ENCODE measurements at regions of chr7 and their contacts with region 1.

Region 1: DNA sequence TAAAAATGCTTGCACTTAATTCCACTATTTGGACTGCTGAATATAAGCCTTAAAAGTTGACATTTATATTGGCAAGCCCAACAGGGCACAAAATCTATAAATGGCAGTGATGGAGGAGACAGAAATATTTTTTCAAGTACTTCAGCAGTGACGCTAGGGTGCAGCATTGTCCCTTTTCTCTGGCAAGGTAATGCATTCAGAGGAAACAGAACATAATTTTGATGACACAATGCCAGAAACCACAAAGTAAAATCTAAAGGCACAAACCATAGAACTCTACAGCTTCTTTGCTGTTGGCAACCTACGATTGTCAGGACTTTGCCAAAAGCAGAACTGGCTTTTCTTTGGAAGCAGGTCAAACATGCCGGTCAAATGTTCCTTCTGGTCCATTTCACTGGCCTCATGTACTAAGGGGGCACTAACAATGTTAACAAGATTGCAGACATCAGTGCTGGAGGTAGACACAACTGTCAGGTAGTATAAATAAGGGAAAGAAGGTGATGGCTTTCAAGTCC is 30.9 kb upstream of the FAM133B start:
- DNase-seq: peak; percentile 86
- H3K4me3 Mint-ChIP-seq: peak overlapping the region; percentile 49
- H3K27ac Mint-ChIP-seq: peak overlapping the region; percentile 93
- H3K4me1 Mint-ChIP-seq: peaks cover 53% of the 10 kb centered on the region
- H3K27me3 Mint-ChIP-seq: no peaks in the 10 kb centered on the region

Region 2: GRCh38 chr7:92517631-92518030 is 103.5 kb before region 1 on chr7:
- CTCF ChIA-PET with region 1: no interaction called
- POLR2A ChIA-PET with region 1: no interaction called
- intact Hi-C with region 1: no loop called
- DNase-seq: no peak
- H3K4me3 Mint-ChIP-seq: no peak overlapping the region
- H3K27ac Mint-ChIP-seq: peak overlapping the region; percentile 6
- H3K4me1 Mint-ChIP-seq: peaks cover 8% of the 10 kb centered on the region
- H3K27me3 Mint-ChIP-seq: no peaks in the 10 kb centered on the region

Region 3: DNA sequence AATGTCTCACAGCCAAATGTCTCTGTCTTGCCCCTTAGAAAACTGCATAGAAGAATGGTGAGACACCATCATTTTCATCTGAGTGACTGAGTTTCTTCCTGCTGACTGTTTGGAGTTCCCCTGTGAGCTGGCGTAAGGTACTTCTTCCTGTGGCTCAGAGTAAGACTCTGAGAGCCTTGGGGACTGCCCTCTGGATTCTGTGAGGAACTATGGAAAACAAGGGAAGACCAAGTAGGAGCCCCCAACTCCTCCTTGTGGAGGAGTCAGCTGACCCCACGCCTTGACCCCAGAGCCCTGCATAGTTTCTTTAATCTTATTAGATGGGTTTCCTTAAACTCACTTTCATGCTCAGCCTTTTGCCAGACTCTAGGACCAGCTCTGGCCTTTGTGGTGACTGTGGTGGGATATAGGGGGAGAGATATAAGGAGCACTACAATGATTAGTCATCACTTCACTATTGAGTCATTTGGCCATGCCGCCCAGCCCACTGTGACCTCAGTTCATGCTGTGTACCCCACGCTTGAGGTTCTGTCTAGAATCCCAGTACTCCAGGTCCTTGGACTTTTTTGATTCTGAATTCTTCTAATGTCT is 20.9 kb after region 1 on chr7:
- CTCF ChIA-PET with region 1: interaction called, 10 read pairs
- POLR2A ChIA-PET with region 1: interaction called, 3 read pairs
- intact Hi-C with region 1: no loop called
- DNase-seq: peak; percentile 84
- H3K4me3 Mint-ChIP-seq: peak overlapping the region; percentile 9
- H3K27ac Mint-ChIP-seq: peak overlapping the region; percentile 96
- H3K4me1 Mint-ChIP-seq: peaks cover 86% of the 10 kb centered on the region
- H3K27me3 Mint-ChIP-seq: no peaks in the 10 kb centered on the region

Region 4: DNA sequence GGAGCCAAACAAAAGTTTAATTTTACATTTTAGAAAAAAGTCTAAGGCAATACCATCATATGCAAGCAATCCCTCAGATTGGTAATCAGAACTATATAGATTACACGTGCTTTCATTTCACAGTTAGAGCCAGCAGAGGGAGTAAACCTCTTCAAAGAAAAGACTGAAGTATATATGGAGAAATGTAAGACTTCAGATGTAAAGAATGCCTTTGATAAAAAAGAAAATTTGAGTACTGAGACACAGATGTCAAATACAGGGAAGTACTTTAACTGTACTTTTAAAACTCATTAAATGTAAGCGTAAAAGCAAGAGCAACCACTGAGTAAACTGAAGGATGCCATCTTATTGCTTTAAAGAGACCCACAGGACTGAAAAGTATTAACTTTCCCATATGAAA is 70.5 kb after region 1 on chr7:
- CTCF ChIA-PET with region 1: interaction called, 6 read pairs
- POLR2A ChIA-PET with region 1: no interaction called
- intact Hi-C with region 1: loop called (anchors 1 kb)
- DNase-seq: no peak
- H3K4me3 Mint-ChIP-seq: no peak overlapping the region
- H3K27ac Mint-ChIP-seq: peak overlapping the region; percentile 83
- H3K4me1 Mint-ChIP-seq: peaks cover 60% of the 10 kb centered on the region
- H3K27me3 Mint-ChIP-seq: no peaks in the 10 kb centered on the region

Region 5: GRCh38 chr7:92880212-92881090 is 259.4 kb after region 1 on chr7:
- CTCF ChIA-PET with region 1: no interaction called
- POLR2A ChIA-PET with region 1: no interaction called
- intact Hi-C with region 1: loop called (anchors 1 kb)
- DNase-seq: peak; percentile 44
- H3K4me3 Mint-ChIP-seq: no peak overlapping the region
- H3K27ac Mint-ChIP-seq: no peak overlapping the region
- H3K4me1 Mint-ChIP-seq: peaks cover 36% of the 10 kb centered on the region
- H3K27me3 Mint-ChIP-seq: no peaks in the 10 kb centered on the region